CD4-positive, alpha-beta T cell (primary cell): ENCODE measurements at regions of chr7 and their contacts with region 1.

Region 1: GRCh38 chr7:102396027-102397019 is at the start of gene PRKRIP1:
- DNase-seq: peak; percentile 70 to 97 (median 80)
- ATAC-seq: peak; percentile 97
- H3K4me3 ChIP-seq: peak within 1 kb of the TSS; percentile 79
- H3K4me3 Mint-ChIP-seq: peak within 1 kb of the TSS; percentile 95
- H3K27ac ChIP-seq: peak within 1 kb of the TSS; percentile 79 to 91
- H3K27ac Mint-ChIP-seq: peak within 1 kb of the TSS; percentile 98
- H3K4me1 ChIP-seq: peaks cover 25% of the 10 kb centered on the region
- H3K4me1 Mint-ChIP-seq: peaks cover 20% of the 10 kb centered on the region
- H3K27me3 ChIP-seq: no peaks in the 10 kb centered on the region
- H3K27me3 Mint-ChIP-seq: no peaks in the 10 kb centered on the region
- CTCF ChIP-seq: no peak
- total RNA-seq, gene PRKRIP1: 47.4 to 48.0 TPM

Region 2: GRCh38 chr7:101941481-101942383 is 454.6 kb before region 1 on chr7:
- CTCF ChIA-PET with region 1: no interaction called
- POLR2A ChIA-PET with region 1: no interaction called
- intact Hi-C with region 1: no loop called
- DNase-seq: no peak
- ATAC-seq: no peak
- H3K4me3 ChIP-seq: no peak overlapping the region
- H3K4me3 Mint-ChIP-seq: no peak overlapping the region
- H3K27ac ChIP-seq: no peak overlapping the region
- H3K27ac Mint-ChIP-seq: no peak overlapping the region
- H3K4me1 ChIP-seq: peaks cover 6% of the 10 kb centered on the region
- H3K4me1 Mint-ChIP-seq: no peaks in the 10 kb centered on the region
- H3K27me3 ChIP-seq: no peaks in the 10 kb centered on the region
- H3K27me3 Mint-ChIP-seq: no peaks in the 10 kb centered on the region
- CTCF ChIP-seq: no peak

Region 3: GRCh38 chr7:102286237-102287110 is 109.8 kb before region 1 on chr7 and contains the start of gene SH2B2:
- CTCF ChIA-PET with region 1: no interaction called
- POLR2A ChIA-PET with region 1: interaction called, 14 read pairs
- intact Hi-C with region 1: no loop called
- DNase-seq: peak in 11 of 14 experiments; percentile 21 to 82 (median 44)
- ATAC-seq: peak; percentile 40
- H3K4me3 ChIP-seq: peak within 1 kb of the TSS; percentile 69
- H3K4me3 Mint-ChIP-seq: peak within 1 kb of the TSS; percentile 91
- H3K27ac ChIP-seq: no peak within 1 kb of the TSS
- H3K27ac Mint-ChIP-seq: no peak within 1 kb of the TSS
- H3K4me1 ChIP-seq: peaks cover 52% of the 10 kb centered on the region
- H3K4me1 Mint-ChIP-seq: peaks cover 21% of the 10 kb centered on the region
- H3K27me3 ChIP-seq: no peaks in the 10 kb centered on the region
- H3K27me3 Mint-ChIP-seq: peaks cover 1% of the 10 kb centered on the region
- CTCF ChIP-seq: no peak
- total RNA-seq, gene SH2B2: 0.77 to 0.95 TPM

Region 4: GRCh38 chr7:102425639-102426267 is 29.4 kb after region 1 on chr7:
- CTCF ChIA-PET with region 1: no interaction called
- POLR2A ChIA-PET with region 1: interaction called, 26 read pairs
- intact Hi-C with region 1: loop called in 1 of 2 experiments (anchors 5 kb)
- DNase-seq: peak; percentile 74 to 96 (median 78)
- ATAC-seq: peak; percentile 75
- H3K4me3 ChIP-seq: peak overlapping the region; percentile 42
- H3K4me3 Mint-ChIP-seq: peak overlapping the region; percentile 86
- H3K27ac ChIP-seq: peak overlapping the region; percentile 95 to 99
- H3K27ac Mint-ChIP-seq: peak overlapping the region; percentile 100
- H3K4me1 ChIP-seq: peaks cover 82% of the 10 kb centered on the region
- H3K4me1 Mint-ChIP-seq: peaks cover 63% of the 10 kb centered on the region
- H3K27me3 ChIP-seq: no peaks in the 10 kb centered on the region
- H3K27me3 Mint-ChIP-seq: no peaks in the 10 kb centered on the region
- CTCF ChIP-seq: no peak

Region 5: GRCh38 chr7:102433219-102434038 is 37.1 kb after region 1 on chr7 and contains the start of gene ORAI2:
- CTCF ChIA-PET with region 1: interaction called, 3 read pairs
- POLR2A ChIA-PET with region 1: interaction called, 3 read pairs
- intact Hi-C with region 1: loop called (anchors 2 to 5 kb)
- DNase-seq: peak; percentile 71 to 93 (median 87)
- ATAC-seq: peak; percentile 56
- H3K4me3 ChIP-seq: peak within 1 kb of the TSS; percentile 79
- H3K4me3 Mint-ChIP-seq: peak within 1 kb of the TSS; percentile 94
- H3K27ac ChIP-seq: peak within 1 kb of the TSS; percentile 92 to 95
- H3K27ac Mint-ChIP-seq: peak within 1 kb of the TSS; percentile 100
- H3K4me1 ChIP-seq: peaks cover 68% of the 10 kb centered on the region
- H3K4me1 Mint-ChIP-seq: peaks cover 47% of the 10 kb centered on the region
- H3K27me3 ChIP-seq: no peaks in the 10 kb centered on the region
- H3K27me3 Mint-ChIP-seq: no peaks in the 10 kb centered on the region
- CTCF ChIP-seq: no peak
- total RNA-seq, gene ORAI2: 12.3 to 16.5 TPM